ENCODE measurements at regions of chr6 and their contacts with region 1.

Region 1: GRCh38 chr6:157667211-157668008 is 155.6 kb upstream of the SNX9 start:
- DNase-seq: peak; percentile 87
- H3K4me3 Mint-ChIP-seq: no peak overlapping the region
- H3K27ac Mint-ChIP-seq: peak overlapping the region; percentile 9
- H3K4me1 Mint-ChIP-seq: peaks cover 14% of the 10 kb centered on the region
- H3K27me3 Mint-ChIP-seq: peaks cover 7% of the 10 kb centered on the region

Region 2: GRCh38 chr6:157879873-157880254 is 212.5 kb after region 1 on chr6:
- intact Hi-C with region 1: loop called (anchors 5 kb)
- DNase-seq: no peak
- H3K4me3 Mint-ChIP-seq: no peak overlapping the region
- H3K27ac Mint-ChIP-seq: no peak overlapping the region
- H3K4me1 Mint-ChIP-seq: peaks cover 52% of the 10 kb centered on the region
- H3K27me3 Mint-ChIP-seq: no peaks in the 10 kb centered on the region

Measured in activated CD4-positive, alpha-beta T cell treated with anti-CD3 and anti-CD28 coated beads, Interleukin-2, amount 10 ng/mL, durations not matched to agents 24 days and 14 days (primary cell).